GM10248 (cell line): ENCODE measurements at regions of chr1 and their contacts with region 1.

Region 1: DNA sequence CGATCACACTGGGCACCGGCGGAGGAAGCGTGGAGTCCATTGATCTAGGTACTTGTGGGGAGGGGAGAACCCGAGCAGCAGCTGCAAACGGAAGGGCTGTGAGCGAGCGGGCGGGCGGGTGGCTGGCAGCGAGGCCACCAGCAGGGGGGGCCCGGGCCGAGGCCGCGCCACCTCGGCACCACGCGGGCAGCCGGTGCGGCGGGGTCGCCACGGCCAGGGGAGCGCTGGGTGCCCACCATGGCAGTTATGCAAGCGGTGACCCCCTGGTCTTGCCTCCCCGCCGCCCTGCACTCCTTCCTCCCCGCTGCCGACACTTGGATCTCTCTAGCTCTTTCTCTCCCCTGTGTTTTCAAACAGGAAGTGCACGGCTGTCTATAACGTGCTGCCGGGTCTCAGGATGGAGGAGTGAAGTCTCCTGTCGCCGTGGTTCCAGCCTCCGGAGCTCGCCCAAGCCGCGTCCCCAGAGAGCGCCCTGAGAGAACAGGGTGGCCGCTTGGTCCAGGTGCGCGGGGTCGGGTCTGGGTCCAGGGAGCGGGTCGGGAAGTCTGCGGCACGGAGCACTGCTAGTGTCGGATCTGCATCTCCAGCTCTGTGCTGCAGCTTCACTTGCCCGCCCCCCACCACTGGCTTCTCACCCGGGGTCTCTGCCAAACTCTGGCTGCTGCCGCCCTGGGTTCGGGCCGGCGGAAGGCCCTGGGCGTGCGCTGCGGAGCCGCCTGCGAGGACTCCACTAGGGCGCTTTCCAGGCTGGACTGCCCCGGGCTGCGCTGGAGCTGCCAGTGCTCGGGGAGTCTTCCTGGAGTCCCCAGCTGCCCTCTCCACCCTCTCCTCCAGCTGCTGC is 22.7 kb downstream of the LRRC8D start:
- DNase-seq: peak; percentile 89
- CTCF ChIP-seq: peak; percentile 80

Region 2: DNA sequence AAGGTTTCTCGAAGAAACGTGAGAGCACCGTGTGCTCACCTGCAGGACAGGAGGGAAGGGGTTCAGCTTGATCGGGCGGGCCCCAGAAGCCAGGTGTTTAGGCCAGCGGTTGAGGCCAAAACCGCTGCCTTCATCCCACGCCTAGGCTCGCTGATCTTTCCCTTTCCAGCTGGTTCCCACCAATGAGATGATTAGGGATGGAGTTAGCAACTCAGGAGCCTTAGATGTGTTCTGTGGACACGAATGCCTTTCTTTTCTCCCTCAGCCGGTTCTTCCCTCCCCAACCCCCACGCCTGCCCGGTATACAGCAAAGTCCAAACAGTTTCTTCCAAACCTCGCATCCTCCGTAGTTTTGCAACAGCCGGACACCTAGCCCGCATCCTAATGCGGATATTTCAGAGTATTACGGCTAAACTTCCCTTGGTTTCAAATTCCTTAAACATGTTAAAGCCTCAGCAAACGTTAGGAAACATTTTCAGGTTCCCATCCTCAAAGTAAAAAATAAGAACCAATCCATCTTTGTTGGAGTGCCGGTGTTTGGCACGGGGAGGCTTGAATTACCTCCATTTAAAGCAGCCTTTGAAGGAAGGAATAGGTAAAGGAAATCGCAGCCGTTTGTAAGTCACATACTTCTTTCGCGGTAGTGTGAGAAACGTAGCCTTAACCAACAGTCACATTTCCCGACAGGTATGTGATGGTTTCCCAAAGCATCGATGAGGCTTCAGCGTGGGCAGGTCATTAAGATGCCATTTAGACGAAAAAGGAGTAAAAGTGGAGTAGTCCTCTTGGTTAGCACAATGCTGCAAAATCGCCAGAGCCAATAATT is 209.5 kb before region 1 on chr1:
- CTCF ChIA-PET with region 1: no interaction called
- POLR2A ChIA-PET with region 1: no interaction called
- DNase-seq: peak; percentile 19
- CTCF ChIP-seq: no peak

Region 3: DNA sequence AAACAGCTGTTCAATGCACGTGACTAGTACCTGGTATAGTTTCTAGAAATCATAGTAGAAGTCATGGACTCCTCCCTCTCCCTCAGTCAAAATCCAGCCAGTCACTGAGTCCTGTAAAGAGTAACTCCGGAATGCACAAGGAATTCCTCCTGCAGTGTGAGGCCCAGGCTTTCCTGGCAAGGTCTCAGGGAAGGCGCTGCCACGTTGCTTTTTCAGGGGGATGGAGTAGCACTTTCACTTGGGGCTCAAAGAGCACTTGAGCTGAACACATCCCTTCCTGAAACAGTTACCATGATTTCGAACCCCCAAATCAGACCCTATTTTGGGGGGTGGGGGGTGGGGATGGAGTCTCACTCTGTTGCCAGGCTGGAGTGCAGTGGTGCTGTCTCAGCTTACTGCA is 49.1 kb before region 1 on chr1:
- CTCF ChIA-PET with region 1: no interaction called
- POLR2A ChIA-PET with region 1: no interaction called
- DNase-seq: no peak
- CTCF ChIP-seq: no peak

Region 4: DNA sequence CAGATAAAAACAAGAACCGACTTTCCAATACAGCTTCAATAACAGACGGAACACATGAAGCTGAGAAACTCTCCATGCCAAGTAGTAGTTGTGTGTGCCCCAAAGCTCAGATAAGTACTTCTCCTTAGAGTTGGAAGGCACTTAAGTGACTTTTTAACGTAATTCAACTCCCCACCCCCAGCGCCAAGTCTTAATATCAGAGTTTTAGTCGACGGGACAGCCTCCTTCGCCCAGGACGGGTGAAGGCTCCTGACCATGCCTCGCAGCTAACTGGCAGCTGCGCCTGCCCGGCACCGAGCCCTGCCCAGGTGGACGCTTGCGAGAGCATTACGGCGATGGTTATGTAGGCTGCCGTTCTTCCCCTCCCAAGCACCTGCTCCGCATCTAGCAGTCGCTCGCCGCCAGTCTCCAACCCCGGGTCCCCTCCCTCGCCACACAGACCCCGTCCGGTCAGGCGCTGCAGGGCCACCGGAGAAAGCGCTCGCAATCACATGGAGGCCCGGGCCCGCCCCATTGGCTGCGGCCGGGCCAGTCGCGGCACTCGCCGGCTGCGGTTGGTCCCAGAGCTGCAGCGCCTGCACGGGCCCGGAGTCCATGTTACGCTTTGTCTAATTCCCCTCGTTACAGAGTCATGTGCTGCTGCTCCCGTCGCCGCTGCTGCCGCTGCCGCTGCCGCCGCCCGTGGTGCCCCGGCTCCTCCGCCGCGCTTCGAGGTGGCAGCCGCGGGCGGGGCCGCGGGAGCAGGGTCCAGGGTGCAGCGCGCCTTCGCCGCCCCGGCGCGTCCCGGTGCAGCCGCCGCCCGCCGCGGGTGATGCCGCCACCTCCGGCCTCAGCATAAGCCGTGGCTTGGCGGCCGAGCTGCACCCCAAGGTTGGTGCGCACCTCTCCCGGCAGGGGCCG is 22.8 kb before region 1 on chr1 and contains the start of gene LRRC8D:
- CTCF ChIA-PET with region 1: interaction called, 36 read pairs
- POLR2A ChIA-PET with region 1: interaction called, 3 read pairs
- DNase-seq: peak; percentile 91
- CTCF ChIP-seq: no peak

Region 5: DNA sequence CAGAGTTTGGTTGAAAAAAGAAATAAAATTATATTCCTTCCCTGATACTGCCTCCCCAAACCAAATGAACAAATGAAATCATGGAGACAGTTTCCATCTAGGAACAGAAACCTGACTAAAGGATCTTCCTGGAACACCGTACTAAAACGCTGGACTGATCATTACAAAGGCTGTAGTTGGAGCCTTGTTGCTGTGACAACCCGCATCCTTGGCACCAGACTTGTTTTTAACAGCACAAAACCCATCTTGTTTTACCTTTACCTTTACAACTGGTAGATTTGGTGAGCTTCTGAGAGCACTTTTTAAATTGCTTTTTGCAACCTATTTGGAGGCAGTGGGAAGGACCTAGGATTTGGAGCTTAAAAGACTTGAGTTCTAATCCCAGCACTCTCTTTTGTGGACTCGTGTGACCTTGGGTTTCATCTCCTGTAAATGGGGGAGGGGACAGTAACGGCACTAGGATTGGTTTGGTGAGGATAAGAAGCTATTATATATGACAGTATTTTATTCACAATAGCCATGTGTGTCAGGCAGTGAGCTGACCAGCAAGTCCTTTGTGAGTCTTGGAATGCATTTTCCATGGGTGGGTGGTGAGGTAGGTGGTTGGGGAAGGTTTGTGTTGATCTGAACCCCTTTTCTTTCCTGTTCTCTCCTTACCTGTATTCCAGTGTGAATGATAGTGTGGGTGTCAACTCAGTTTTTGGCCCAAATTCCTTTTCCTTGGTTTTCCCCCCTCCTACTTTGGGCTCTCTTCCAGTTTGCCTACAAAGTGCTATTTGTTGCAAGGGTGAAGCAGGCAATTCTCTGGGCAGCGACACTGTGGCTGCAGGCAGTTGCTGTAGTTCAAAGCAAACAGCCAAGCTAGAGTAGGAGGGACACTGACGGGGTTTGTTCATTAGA is 10.1 kb before region 1 on chr1:
- CTCF ChIA-PET with region 1: interaction called, 16 read pairs
- POLR2A ChIA-PET with region 1: no interaction called
- DNase-seq: no peak
- CTCF ChIP-seq: no peak

Region 6: GRCh38 chr1:89863165-89863830 is 19.8 kb after region 1 on chr1:
- CTCF ChIA-PET with region 1: interaction called, 23 read pairs
- POLR2A ChIA-PET with region 1: no interaction called
- DNase-seq: no peak
- CTCF ChIP-seq: no peak

Region 7: GRCh38 chr1:89890085-89890752 is 46.7 kb after region 1 on chr1:
- CTCF ChIA-PET with region 1: no interaction called
- POLR2A ChIA-PET with region 1: no interaction called
- DNase-seq: no peak
- CTCF ChIP-seq: no peak

Region 8: GRCh38 chr1:89965193-89965768 is 121.8 kb after region 1 on chr1:
- CTCF ChIA-PET with region 1: interaction called, 12 read pairs
- POLR2A ChIA-PET with region 1: no interaction called
- DNase-seq: no peak
- CTCF ChIP-seq: no peak

Region 9: GRCh38 chr1:90012305-90012704 is 168.8 kb after region 1 on chr1:
- CTCF ChIA-PET with region 1: no interaction called
- POLR2A ChIA-PET with region 1: no interaction called
- DNase-seq: no peak
- CTCF ChIP-seq: no peak